Endothelial cell of umbilical vein (primary cell): ENCODE measurements at regions of chr12 and their contacts with region 1.

Region 1: GRCh38 chr12:124567661-124568373 is 405 bp upstream of the NCOR2 start:
- DNase-seq: peak; percentile 70
- H3K4me3 ChIP-seq: peak overlapping the region; percentile 35 to 86 (median 45)
- H3K27ac ChIP-seq: peak overlapping the region; percentile 43
- H3K4me1 ChIP-seq: peaks cover 10% of the 10 kb centered on the region
- H3K27me3 ChIP-seq: no peaks in the 10 kb centered on the region
- CTCF ChIP-seq: peak in 1 of 2 donors; percentile 12
- POLR2A ChIP-seq: no peak

Region 2: DNA sequence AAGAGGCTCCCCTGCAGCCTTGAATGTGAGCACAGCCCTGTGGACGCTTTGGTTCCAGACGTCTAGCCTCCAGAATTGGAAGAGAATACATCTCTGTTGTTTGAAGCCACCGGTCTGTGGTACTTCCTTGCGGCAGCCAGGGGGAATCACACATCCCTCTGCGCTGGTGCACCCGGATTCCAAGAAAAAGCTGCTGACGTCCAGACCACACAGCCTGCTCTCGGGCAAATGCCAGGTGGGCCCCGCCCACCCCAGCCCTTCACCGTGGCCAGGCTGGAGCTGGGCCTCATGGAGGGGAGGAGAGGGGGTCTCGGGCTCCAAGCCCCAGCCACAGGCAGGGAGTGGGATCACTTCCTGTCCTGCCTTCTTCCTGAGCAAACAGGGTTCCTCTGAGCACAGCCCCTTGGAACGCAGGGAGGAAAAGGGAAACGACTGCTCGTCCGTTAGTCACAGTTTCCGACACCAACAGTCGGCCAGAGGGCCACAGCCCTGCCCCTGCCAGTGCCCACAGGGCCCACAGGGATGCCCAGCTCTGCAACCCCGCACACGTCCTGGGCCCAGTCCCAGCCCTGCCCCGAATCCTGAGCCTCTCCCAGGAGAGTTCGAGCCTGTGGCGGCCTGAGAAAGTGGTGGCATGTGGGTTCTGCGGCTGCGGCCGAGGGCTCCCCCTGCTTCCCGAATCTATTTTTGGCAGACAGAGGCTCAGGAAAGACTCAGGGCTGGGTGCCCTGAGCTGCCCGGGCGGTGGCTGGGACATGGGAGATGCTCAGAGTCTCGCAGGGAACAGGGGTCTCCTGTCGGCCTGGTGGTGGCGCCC is 187.7 kb before region 1 on chr12:
- CTCF ChIA-PET with region 1: interaction called, 3 read pairs
- POLR2A ChIA-PET with region 1: interaction called, 3 read pairs
- dilution Hi-C with region 1: no loop called
- intact Hi-C with region 1: loop called (anchors 2 kb)
- DNase-seq: peak; percentile 93
- H3K4me3 ChIP-seq: no peak overlapping the region
- H3K27ac ChIP-seq: peak overlapping the region; percentile 93
- H3K4me1 ChIP-seq: peaks cover 62% of the 10 kb centered on the region
- H3K27me3 ChIP-seq: no peaks in the 10 kb centered on the region
- CTCF ChIP-seq: peak; percentile 43 to 54
- POLR2A ChIP-seq: peak; percentile 80

Region 3: GRCh38 chr12:124441443-124442194 is 126.2 kb before region 1 on chr12:
- CTCF ChIA-PET with region 1: no interaction called
- POLR2A ChIA-PET with region 1: no interaction called
- dilution Hi-C with region 1: no loop called
- intact Hi-C with region 1: loop called (anchors 1 kb)
- DNase-seq: peak; percentile 83
- H3K4me3 ChIP-seq: peak overlapping the region in 1 of 3 experiments; percentile 5
- H3K27ac ChIP-seq: peak overlapping the region; percentile 89
- H3K4me1 ChIP-seq: peaks cover 27% of the 10 kb centered on the region
- H3K27me3 ChIP-seq: no peaks in the 10 kb centered on the region
- CTCF ChIP-seq: no peak
- POLR2A ChIP-seq: peak; percentile 56

Region 4: GRCh38 chr12:124512667-124513296 is 55.0 kb before region 1 on chr12:
- CTCF ChIA-PET with region 1: no interaction called
- POLR2A ChIA-PET with region 1: no interaction called
- dilution Hi-C with region 1: no loop called
- intact Hi-C with region 1: no loop called
- DNase-seq: peak; percentile 96
- H3K4me3 ChIP-seq: no peak overlapping the region
- H3K27ac ChIP-seq: peak overlapping the region; percentile 94
- H3K4me1 ChIP-seq: peaks cover 50% of the 10 kb centered on the region
- H3K27me3 ChIP-seq: no peaks in the 10 kb centered on the region
- CTCF ChIP-seq: no peak
- POLR2A ChIP-seq: no peak

Region 5: DNA sequence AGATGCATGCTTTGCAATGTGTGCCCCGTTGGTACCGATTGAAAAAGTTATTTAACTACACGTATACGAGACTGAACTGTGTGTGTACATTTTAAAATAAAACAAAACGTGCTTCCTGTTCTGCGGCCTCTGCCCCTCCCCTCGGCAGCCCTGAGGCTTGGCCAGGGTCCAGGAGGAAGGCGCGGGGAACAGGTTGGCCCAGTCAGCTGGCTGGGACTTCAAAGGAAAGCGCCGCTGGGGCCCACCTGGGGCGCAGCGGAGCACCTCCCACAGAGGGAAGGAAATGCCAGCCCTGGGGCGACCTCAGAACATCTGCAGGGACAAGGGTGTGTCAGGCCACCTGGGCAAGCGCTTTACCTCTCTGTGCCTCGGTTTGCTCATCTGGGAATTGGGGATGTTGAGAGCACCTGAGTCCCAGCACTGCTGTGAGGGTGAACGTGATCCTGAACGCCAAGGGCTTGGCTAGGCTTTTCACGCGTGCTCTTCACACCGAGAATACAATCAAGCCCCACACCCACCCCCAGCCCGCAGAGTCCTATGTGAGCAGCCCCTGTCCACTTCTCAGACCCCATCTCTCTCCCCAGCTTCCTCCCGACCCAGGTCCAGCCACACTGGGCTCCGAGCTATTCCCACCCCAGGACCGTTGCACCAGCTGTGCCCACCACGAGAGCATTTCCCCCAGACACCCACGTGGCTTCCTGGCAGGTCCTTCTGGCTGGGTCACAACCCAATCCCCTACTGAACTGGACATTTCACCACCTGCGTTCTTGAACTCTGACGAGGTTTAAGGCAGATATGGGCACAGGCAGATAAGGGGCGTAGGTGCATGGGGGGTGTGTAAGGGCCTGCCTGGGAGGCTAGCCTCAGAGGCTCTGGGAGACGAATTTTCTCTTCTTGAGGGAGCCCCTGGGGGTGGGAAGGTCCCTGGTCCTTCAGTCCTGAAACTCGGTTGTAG is 41.5 kb after region 1 on chr12:
- CTCF ChIA-PET with region 1: interaction called, 3 read pairs
- POLR2A ChIA-PET with region 1: no interaction called
- dilution Hi-C with region 1: no loop called
- intact Hi-C with region 1: loop called (anchors 2 kb)
- DNase-seq: peak; percentile 76
- H3K4me3 ChIP-seq: no peak overlapping the region
- H3K27ac ChIP-seq: no peak overlapping the region
- H3K4me1 ChIP-seq: peaks cover 23% of the 10 kb centered on the region
- H3K27me3 ChIP-seq: no peaks in the 10 kb centered on the region
- CTCF ChIP-seq: no peak
- POLR2A ChIP-seq: no peak

Region 6: DNA sequence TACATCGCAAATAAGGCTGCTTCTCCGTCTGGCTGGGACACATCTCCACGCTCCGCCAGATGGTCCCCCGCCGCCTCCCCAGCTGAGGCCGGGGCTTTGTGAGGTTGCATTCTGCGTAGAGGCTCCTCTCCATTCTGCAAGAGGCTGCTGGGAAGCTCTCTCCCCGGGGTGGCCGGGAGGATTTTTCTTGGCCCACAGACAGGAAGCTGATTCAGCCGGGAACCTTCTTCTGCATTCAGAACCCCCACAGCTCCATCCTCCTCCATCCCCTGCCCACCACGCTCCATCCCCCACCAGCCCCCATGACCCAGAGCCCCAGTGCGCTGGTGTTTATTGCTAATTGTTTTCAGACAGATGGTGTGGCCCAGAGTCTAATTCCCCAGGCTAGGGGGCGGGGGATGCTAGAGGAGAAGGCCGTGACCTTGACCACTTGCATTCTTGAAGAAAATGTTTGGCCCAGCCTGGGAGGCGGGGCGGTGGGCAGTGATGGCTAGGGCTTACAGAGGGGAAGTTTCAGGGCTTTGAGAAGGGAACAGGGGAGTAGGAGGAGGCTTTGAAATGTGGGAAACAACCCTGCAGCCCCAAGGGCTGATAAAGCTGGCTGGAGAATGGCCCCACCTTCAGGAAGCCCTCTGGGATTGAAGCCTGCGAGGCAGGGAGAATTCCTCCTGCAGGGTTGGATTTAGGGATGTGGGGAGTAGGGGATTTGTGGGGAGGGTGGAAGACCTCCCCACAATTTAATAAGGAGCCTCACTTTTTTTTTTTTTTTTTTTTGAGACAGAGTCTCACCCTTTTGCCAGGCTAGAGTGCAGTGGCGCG is 88.1 kb after region 1 on chr12:
- CTCF ChIA-PET with region 1: interaction called, 9 read pairs
- POLR2A ChIA-PET with region 1: no interaction called
- dilution Hi-C with region 1: no loop called
- intact Hi-C with region 1: loop called (anchors 1 kb)
- DNase-seq: peak; percentile 87
- H3K4me3 ChIP-seq: no peak overlapping the region
- H3K27ac ChIP-seq: peak overlapping the region; percentile 91
- H3K4me1 ChIP-seq: peaks cover 51% of the 10 kb centered on the region
- H3K27me3 ChIP-seq: no peaks in the 10 kb centered on the region
- CTCF ChIP-seq: no peak
- POLR2A ChIP-seq: no peak

Region 7: DNA sequence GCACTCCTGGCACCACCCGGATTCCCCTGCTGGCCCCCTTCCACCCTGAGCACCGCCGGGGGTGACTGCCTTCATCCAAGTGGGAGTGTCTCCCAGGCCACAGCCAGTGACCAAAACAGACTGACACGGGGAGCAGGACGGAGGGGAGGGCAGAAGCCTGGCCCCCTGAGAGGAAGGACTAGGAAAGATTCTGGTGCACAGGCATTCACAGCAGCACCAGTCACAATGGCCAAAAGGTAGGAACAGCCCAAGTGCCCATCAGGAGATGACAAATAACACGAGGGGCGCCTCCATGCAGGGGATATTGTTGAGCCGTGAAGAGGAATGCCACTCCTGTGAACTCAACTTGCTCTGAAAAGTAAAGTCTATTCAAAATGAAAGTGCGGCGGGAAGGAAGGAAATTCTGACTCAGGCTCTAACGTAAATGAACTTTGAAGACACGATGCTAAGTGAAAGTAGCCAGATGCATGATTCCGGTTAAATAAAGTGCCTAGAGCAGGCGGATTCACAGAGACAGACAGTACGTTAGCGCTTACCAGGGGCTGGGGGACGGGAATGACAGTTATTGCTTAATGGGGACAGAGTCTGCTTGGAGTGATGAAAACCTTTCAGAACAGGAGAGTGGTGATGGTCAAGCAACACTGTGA is 145.7 kb after region 1 on chr12:
- CTCF ChIA-PET with region 1: no interaction called
- POLR2A ChIA-PET with region 1: no interaction called
- dilution Hi-C with region 1: no loop called
- intact Hi-C with region 1: loop called (anchors 1 kb)
- DNase-seq: peak; percentile 96
- H3K4me3 ChIP-seq: peak overlapping the region in 1 of 3 experiments; percentile 9
- H3K27ac ChIP-seq: peak overlapping the region; percentile 94
- H3K4me1 ChIP-seq: peaks cover 24% of the 10 kb centered on the region
- H3K27me3 ChIP-seq: no peaks in the 10 kb centered on the region
- CTCF ChIP-seq: no peak
- POLR2A ChIP-seq: peak; percentile 35

Region 8: GRCh38 chr12:124927201-124928094 is 359.6 kb after region 1 on chr12:
- CTCF ChIA-PET with region 1: no interaction called
- POLR2A ChIA-PET with region 1: no interaction called
- dilution Hi-C with region 1: no loop called
- intact Hi-C with region 1: loop called (anchors 5 kb)
- DNase-seq: peak; percentile 95
- H3K4me3 ChIP-seq: peak overlapping the region; percentile 55 to 85 (median 74)
- H3K27ac ChIP-seq: peak overlapping the region; percentile 93
- H3K4me1 ChIP-seq: peaks cover 14% of the 10 kb centered on the region
- H3K27me3 ChIP-seq: no peaks in the 10 kb centered on the region
- CTCF ChIP-seq: no peak
- POLR2A ChIP-seq: peak; percentile 21

Region 9: GRCh38 chr12:125114365-125115141 is 546.7 kb after region 1 on chr12:
- CTCF ChIA-PET with region 1: no interaction called
- POLR2A ChIA-PET with region 1: no interaction called
- dilution Hi-C with region 1: no loop called
- intact Hi-C with region 1: no loop called
- DNase-seq: no peak
- H3K4me3 ChIP-seq: no peak overlapping the region
- H3K27ac ChIP-seq: no peak overlapping the region
- H3K4me1 ChIP-seq: no peaks in the 10 kb centered on the region
- H3K27me3 ChIP-seq: no peaks in the 10 kb centered on the region
- CTCF ChIP-seq: no peak
- POLR2A ChIP-seq: no peak